Left lung (tissue), 14 donors: ENCODE measurements at regions of chr18 and their contacts with region 1.

Region 1: DNA sequence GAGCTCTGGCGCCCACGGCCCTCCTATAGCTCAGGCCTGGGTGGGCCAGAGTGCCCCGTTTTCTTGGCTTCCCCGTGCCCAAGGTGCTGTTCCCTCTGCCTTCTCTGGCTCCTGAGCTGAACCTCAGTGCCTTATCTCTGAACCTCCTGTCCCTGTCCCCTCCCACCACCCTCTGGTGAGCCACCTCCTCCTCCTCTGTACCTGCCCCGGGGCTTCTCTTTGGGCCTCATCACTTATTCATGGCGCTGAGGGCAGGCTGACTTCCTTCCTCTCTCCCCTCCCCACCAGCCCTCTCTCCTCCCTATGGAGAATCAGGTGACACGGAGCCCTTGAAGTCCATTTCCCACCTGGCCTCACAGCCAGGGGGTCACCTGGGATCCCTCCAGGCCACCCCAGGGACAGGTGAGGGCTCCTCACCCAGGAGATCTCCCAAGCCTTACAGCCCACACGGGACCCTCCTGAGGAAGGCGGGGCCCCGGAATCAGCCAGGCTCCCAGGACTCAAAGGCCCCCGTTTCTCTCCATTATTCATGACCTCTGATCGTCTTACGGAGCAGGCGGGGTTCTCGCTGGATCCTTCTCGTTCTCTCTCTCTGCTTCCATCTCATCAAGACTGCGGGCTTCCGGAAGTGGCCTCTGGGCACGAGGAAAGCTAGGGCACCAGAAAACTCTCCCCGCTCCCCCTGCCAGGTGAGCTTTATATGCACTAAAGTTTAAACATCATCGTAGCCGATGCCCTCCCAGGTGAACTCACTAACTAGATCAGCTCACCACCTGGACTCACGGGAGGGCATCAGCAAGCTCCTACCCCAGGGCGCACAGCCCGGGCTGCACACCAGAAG is at the start of gene LOXHD1:
- DNase-seq: no peak
- ATAC-seq: no peak
- H3K4me3 ChIP-seq: no peak within 1 kb of the TSS
- H3K27ac ChIP-seq: no peak within 1 kb of the TSS
- H3K4me1 ChIP-seq: no peaks in the 10 kb centered on the region
- H3K27me3 ChIP-seq: peaks cover 0 to 3% of the 10 kb centered on the region in 2 donors
- CTCF ChIP-seq: no peak
- polyA plus RNA-seq, gene LOXHD1: 1.00 to 2.0 (median 1.4) TPM

Region 2: DNA sequence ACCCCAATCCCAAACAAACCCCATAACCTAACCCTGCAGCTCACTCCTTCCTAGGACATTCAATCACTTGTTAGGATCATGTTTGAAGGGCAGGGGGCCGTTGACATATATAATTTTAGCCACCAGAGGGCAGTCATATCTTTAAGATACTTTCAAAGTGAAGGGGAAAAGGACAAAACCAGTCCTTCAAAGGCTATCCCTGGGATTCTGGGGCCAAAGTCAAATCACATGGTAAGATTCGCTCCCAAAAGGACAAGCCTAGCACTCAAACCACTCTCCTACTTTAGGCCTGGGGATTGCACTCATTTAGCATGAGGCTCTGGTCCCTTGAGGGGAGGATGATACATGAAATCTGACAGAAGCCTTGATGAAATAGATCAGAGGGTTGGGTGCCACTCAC is 508.5 kb before region 1 on chr18:
- intact Hi-C with region 1: loop called in 1 of 2 experiments (anchors 10 kb)
- DNase-seq: peak in 2 of 4 donors; percentile 24 to 43
- ATAC-seq: peak; percentile 75
- H3K4me3 ChIP-seq: no peak overlapping the region
- H3K27ac ChIP-seq: no peak overlapping the region
- H3K4me1 ChIP-seq: peaks cover 0 to 14% of the 10 kb centered on the region in 2 donors
- H3K27me3 ChIP-seq: no peaks in the 10 kb centered on the region
- CTCF ChIP-seq: peak; percentile 51 to 72

Region 3: DNA sequence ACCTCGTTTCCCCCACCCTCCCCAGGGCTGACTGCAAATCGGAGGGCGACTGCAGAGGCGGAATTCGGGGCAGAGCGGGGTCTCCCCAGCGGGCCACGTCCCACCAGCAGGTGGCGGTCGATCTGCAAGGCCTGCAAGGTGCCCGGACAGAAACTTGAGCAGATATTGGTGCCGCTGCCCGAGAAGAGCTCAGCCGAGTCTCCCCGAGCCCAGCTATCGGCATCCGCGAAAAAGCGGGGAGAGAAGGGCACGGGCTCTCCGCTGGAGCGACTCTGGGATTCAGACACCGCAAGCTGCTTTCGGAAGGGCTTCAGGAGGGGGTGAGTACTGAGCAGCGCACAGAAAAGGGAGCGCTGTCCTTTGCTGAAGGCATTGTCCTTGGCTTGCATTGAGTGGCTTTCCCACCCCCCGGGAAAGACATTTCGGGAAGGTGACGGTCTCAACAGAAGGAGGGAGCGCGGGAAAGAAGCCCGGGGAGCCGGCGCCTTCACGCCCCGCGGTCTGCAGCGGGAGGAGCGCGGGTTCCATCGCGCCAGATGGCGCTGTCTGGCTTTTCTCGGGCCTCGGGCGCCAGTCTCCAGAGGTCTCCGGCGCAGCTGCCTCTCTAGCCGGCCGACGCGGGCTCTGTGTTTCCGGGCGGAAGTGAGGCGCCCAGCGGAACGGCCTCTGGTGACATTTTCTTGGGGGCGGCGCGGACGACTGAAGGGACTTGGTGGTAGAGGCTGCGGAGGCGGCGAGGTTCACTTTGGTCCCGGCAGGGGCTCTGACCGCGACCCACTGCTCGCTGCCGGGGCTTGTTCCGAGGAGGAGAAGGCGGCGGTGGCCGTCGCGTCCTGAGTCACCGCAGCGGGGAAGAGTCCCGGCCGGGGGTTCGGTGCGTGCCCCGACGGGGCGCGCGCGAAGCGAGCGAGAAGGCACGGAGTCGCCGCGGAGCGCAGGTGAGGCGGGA is 483.7 kb before region 1 on chr18:
- intact Hi-C with region 1: loop called in 1 of 2 experiments (anchors 10 kb)
- DNase-seq: peak; percentile 89 to 99 (median 94)
- ATAC-seq: peak; percentile 99
- H3K4me3 ChIP-seq: peak overlapping the region; percentile 78 to 97
- H3K27ac ChIP-seq: peak overlapping the region; percentile 91
- H3K4me1 ChIP-seq: peaks cover 6 to 38% of the 10 kb centered on the region in 2 donors
- H3K27me3 ChIP-seq: no peaks in the 10 kb centered on the region
- CTCF ChIP-seq: peak; percentile 86 to 88